ENCODE measurements at regions of chr2 and their contacts with region 1.

Region 1: DNA sequence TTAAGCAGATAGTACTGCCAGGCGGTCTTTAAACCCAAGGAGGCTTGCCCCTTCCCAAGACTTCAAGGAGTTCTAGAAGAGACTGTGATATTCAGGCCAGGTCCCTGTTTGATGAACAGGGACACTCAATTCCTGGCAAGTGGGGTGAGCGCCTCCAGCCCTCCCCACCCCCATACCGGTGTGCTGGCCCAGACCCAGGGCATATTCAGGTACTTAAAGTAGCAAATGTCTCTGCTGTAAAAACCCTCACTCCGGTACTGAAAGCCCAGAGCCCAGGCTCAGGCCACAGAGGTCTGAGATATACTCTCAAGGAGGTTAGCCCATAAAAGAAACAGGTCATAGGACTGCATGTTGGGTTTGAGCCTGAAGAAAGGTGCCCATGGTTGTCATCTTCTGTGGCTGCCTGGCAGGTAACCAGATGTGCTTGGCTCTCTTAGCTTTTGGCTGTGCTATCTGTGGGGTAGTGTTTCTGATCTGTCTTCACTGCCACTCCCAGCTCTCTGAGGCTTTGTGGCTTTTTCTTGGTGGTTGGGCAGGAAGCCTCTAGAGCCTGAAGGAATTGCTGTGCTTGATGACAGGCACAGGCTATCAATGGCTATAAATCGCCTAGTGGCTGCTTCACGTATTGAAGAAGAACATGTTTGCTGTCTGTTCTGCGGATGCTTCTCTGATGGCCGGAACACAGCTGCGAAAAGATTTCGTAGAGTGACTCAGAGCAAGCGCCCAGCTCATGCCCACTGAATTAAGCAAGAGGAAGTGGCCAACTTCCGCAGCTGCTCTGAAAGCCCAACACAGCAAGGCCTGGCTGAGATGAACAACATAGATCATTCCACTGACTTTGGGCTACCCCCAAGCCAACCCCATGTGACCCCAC is 63.3 kb upstream of the ALPP start:
- DNase-seq: peak; percentile 71 to 93
- H3K4me3 ChIP-seq: no peak overlapping the region
- CTCF ChIP-seq: no peak
- POLR2A ChIP-seq: no peak

Region 2: GRCh38 chr2:231000211-231000904 is 1314.9 kb before region 1 on chr2:
- intact Hi-C with region 1: no loop called
- DNase-seq: no peak
- H3K4me3 ChIP-seq: no peak overlapping the region
- CTCF ChIP-seq: no peak
- POLR2A ChIP-seq: no peak

Region 3: DNA sequence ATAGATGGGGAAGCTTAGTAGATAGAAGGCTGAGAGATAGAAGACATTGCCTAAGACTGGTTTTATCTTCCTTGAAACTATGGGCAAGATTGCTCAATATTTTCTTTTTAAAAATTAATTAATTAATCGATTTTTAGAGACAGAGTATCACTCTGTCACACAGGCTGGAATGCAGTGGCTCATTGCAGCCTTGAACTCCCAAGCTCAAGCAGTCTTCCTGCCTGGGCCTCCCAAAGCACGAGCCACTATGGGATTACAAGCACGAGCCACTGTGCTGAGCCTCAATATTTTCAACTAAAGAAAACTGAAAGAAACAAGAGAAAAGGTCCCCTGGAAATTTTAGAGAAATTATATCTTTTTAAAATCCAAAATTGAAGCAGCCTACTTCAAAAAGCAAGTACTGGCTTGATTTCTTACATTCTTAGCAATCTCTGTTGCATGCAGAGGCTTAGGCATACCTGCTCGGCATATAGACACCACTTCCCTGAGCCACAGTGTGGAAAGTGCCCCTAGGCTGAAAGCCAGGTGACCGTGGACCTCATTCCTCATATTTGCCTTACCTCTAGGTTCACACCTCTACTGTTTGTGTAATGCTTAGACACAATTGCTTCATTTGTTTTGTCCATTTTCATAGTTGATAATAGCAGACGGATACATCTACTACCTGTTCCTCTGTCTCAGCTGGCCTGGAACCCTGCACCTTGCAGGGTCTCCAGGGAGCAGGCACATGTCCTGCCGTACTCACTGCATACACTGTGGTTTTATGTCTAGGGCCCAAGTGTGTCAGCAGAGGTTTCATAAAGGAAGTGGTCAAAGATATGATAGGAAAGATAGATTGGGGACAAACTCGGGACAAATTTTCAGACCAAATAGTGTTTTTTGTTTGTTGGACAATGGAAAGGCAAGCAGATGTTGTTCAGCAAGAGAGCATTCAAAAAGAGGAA is 103.3 kb before region 1 on chr2:
- intact Hi-C with region 1: no loop called
- DNase-seq: no peak
- H3K4me3 ChIP-seq: no peak overlapping the region
- CTCF ChIP-seq: no peak
- POLR2A ChIP-seq: no peak

Region 4: GRCh38 chr2:232260075-232260474 is 55.2 kb before region 1 on chr2:
- intact Hi-C with region 1: loop called (anchors 10 kb)
- DNase-seq: no peak
- H3K4me3 ChIP-seq: no peak overlapping the region
- CTCF ChIP-seq: no peak
- POLR2A ChIP-seq: no peak